T-cell (primary cell): ENCODE measurements at regions of chr10 and their contacts with region 1.

Region 1: GRCh38 chr10:63166742-63167258 is 33.7 kb downstream of the NRBF2 start:
- DNase-seq: peak in 13 of 35 experiments; percentile 4 to 80 (median 19)
- ATAC-seq: peak; percentile 69 to 74 (median 70)
- H3K4me3 ChIP-seq: no peak overlapping the region
- H3K4me3 Mint-ChIP-seq: no peak overlapping the region
- H3K27ac ChIP-seq: no peak overlapping the region
- H3K27ac Mint-ChIP-seq: no peak overlapping the region
- H3K4me1 ChIP-seq: no peaks in the 10 kb centered on the region
- H3K4me1 Mint-ChIP-seq: peaks cover 2 to 3% (median 3%) of the 10 kb centered on the region in 3 donors
- H3K27me3 ChIP-seq: no peaks in the 10 kb centered on the region
- H3K27me3 Mint-ChIP-seq: no peaks in the 10 kb centered on the region

Region 2: DNA sequence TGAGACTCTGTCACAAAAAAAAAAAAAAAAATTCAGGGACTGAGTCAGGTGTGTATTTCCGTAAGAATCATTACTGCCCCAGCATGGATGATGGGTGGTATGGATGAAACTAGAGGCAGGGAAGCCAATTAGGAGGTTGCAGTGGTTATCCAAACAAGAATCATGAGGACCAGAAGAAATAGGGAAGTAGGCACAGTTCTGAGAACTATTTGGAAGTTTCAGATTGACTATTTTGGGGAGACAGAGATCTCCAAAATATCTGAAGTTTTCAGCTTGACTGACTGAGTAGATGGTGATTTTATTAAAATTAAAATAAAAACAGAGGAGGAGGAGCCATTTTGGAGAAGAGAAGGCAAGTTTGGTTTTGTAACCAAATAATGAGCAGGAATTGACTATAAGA is 153.0 kb before region 1 on chr10:
- CTCF ChIA-PET with region 1: no interaction called
- POLR2A ChIA-PET with region 1: no interaction called
- DNase-seq: no peak
- ATAC-seq: no peak
- H3K4me3 ChIP-seq: no peak overlapping the region
- H3K4me3 Mint-ChIP-seq: no peak overlapping the region
- H3K27ac ChIP-seq: no peak overlapping the region
- H3K27ac Mint-ChIP-seq: no peak overlapping the region
- H3K4me1 ChIP-seq: no peaks in the 10 kb centered on the region
- H3K4me1 Mint-ChIP-seq: no peaks in the 10 kb centered on the region
- H3K27me3 ChIP-seq: no peaks in the 10 kb centered on the region
- H3K27me3 Mint-ChIP-seq: peaks cover 8 to 9% of the 10 kb centered on the region in 2 donors

Region 3: GRCh38 chr10:63133056-63133820 is 33.6 kb before region 1 on chr10 and contains the start of gene NRBF2:
- CTCF ChIA-PET with region 1: interaction called, 3 to 11 read pairs
- POLR2A ChIA-PET with region 1: no interaction called
- DNase-seq: peak; percentile 93 to 99 (median 96)
- ATAC-seq: peak; percentile 91 to 96 (median 94)
- H3K4me3 ChIP-seq: peak within 1 kb of the TSS; percentile 82 to 92
- H3K4me3 Mint-ChIP-seq: peak within 1 kb of the TSS; percentile 87 to 90 (median 90)
- H3K27ac ChIP-seq: peak within 1 kb of the TSS; percentile 96
- H3K27ac Mint-ChIP-seq: peak within 1 kb of the TSS; percentile 91 to 94
- H3K4me1 ChIP-seq: peaks cover 9 to 36% of the 10 kb centered on the region in 2 experiments
- H3K4me1 Mint-ChIP-seq: peaks cover 41 to 45% (median 41%) of the 10 kb centered on the region in 3 donors
- H3K27me3 ChIP-seq: peaks cover 0 to 6% of the 10 kb centered on the region in 2 experiments
- H3K27me3 Mint-ChIP-seq: peaks cover 4 to 6% of the 10 kb centered on the region in 2 donors
- total RNA-seq, gene NRBF2: 14.8 to 18.5 (median 17.2) TPM

Region 4: GRCh38 chr10:63145782-63146181 is 21.0 kb before region 1 on chr10:
- CTCF ChIA-PET with region 1: interaction called, 6 to 19 read pairs
- POLR2A ChIA-PET with region 1: no interaction called
- DNase-seq: no peak
- ATAC-seq: no peak
- H3K4me3 ChIP-seq: no peak overlapping the region
- H3K4me3 Mint-ChIP-seq: no peak overlapping the region
- H3K27ac ChIP-seq: no peak overlapping the region
- H3K27ac Mint-ChIP-seq: no peak overlapping the region
- H3K4me1 ChIP-seq: peaks cover 0 to 11% of the 10 kb centered on the region in 2 experiments
- H3K4me1 Mint-ChIP-seq: peaks cover 59 to 68% (median 60%) of the 10 kb centered on the region in 3 donors
- H3K27me3 ChIP-seq: no peaks in the 10 kb centered on the region
- H3K27me3 Mint-ChIP-seq: no peaks in the 10 kb centered on the region

Region 5: DNA sequence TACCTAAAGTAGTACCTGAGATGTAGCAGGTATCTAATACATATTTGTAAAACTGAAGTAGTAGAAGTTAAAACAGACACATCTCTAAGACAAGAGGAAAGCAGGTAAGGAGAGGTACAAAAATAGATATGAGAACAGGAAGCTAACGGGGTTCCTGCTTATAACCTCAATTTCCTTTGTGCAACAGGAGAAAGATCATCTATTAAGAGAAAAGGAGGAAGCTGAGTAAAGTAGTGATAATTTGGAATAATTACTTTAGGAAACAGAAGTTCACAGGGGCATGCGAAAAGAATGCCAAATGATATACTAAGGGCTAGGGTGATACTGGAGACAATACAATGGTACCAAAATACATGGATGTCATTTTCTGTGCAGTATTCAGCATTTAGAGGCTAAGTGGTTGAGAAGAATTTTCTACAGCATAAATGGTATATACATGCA is 75.1 kb after region 1 on chr10:
- CTCF ChIA-PET with region 1: no interaction called
- POLR2A ChIA-PET with region 1: no interaction called
- DNase-seq: peak in 1 of 35 experiments; percentile 34
- ATAC-seq: peak; percentile 56 to 79 (median 68)
- H3K4me3 ChIP-seq: peak overlapping the region in 1 of 2 donors; percentile 23
- H3K4me3 Mint-ChIP-seq: peak overlapping the region; percentile 39 to 69 (median 66)
- H3K27ac ChIP-seq: peak overlapping the region; percentile 39
- H3K27ac Mint-ChIP-seq: peak overlapping the region; percentile 84 to 90
- H3K4me1 ChIP-seq: peaks cover 37 to 48% of the 10 kb centered on the region in 2 experiments
- H3K4me1 Mint-ChIP-seq: peaks cover 78 to 86% (median 81%) of the 10 kb centered on the region in 3 donors
- H3K27me3 ChIP-seq: no peaks in the 10 kb centered on the region
- H3K27me3 Mint-ChIP-seq: no peaks in the 10 kb centered on the region